SK-N-SH (cell line): ENCODE measurements at regions of chrX and their contacts with region 1.

Region 1: DNA sequence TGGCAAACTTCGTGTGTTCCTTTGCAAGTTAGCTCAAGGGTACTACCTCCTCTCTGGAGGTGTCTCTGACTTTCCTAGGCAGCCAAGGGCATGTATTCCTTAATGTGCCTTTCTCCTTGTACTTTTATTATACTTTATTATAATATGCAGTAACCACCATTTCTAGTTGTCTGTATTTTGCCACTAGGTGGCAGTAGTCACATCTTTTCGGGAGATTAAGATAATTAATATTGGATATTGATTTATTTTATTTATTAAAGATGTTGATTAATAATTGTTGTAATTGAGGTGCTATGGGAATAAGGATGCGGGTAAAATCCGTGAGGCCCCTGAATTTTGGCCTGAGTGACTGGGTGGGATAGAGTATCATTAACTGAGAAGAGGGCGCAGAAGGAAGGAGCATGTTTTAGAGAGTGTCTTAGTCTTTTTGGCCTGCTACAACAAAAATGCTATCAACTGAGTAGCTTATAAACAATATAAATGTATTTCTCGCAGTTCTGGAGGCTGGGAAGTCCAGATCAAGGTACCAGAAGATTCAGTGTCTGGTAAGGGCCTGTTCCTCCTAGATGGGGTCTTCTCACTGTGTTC is 153.3 kb downstream of the TMEM164 start:
- DNase-seq: no peak
- H3K4me3 ChIP-seq: no peak overlapping the region
- H3K27ac ChIP-seq: no peak overlapping the region
- H3K4me1 ChIP-seq: no peaks in the 10 kb centered on the region
- H3K27me3 ChIP-seq: no peaks in the 10 kb centered on the region
- CTCF ChIP-seq: peak; percentile 64
- EP300 ChIP-seq: no peak
- RAD21 ChIP-seq: peak; percentile 38; the same call in 1 of the 2 replicates

Region 2: DNA sequence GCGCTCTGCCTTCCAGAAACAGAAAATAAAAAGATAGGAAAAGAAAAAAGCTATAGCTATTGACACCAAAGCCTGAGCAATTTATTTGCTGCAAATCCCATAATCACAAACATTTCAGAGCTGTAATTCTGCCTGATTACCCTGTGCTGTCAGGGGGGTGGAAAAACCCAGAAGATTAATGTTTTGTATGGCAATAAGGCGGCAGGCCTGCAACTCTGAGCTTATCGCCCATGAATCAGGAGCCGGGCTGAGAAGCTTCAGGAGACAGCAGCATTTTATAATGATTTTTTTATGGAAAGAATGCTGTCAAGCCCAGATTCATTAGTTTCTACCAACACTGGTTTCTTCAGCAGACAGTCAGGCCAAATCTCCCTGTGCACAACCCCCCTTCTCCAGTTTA is 235.9 kb before region 1 on chrX:
- CTCF ChIA-PET with region 1: no interaction called
- POLR2A ChIA-PET with region 1: no interaction called
- DNase-seq: peak; percentile 38
- H3K4me3 ChIP-seq: no peak overlapping the region
- H3K27ac ChIP-seq: 0 out of 4 replicates have a peak overlapping the region, but pooled peaks of 1 of the 2 experiments have one; percentile 11
- H3K4me1 ChIP-seq: no peaks in the 10 kb centered on the region
- H3K27me3 ChIP-seq: peaks cover 10% of the 10 kb centered on the region; the same call in 1 of the 2 replicates
- CTCF ChIP-seq: no peak
- EP300 ChIP-seq: no peak
- RAD21 ChIP-seq: 0 out of 2 replicates have a peak, but pooled peaks have one; percentile 3

Region 3: GRCh38 chrX:110180176-110180927 is 24.1 kb after region 1 on chrX:
- CTCF ChIA-PET with region 1: interaction called, 10 read pairs
- POLR2A ChIA-PET with region 1: no interaction called
- DNase-seq: no peak
- H3K4me3 ChIP-seq: no peak overlapping the region
- H3K27ac ChIP-seq: peak overlapping the region in 1 of 2 experiments; percentile 59; a peak in 2 of 4 replicates
- H3K4me1 ChIP-seq: no peaks in the 10 kb centered on the region; a peak in 1 of 4 replicates
- H3K27me3 ChIP-seq: no peaks in the 10 kb centered on the region
- CTCF ChIP-seq: no peak
- EP300 ChIP-seq: no peak
- RAD21 ChIP-seq: no peak